Activated B cell treated with CpG ODN at 0.5 μM for 24 hours (primary cell): ENCODE measurements at regions of chr12 and their contacts with region 1.

Region 1: DNA sequence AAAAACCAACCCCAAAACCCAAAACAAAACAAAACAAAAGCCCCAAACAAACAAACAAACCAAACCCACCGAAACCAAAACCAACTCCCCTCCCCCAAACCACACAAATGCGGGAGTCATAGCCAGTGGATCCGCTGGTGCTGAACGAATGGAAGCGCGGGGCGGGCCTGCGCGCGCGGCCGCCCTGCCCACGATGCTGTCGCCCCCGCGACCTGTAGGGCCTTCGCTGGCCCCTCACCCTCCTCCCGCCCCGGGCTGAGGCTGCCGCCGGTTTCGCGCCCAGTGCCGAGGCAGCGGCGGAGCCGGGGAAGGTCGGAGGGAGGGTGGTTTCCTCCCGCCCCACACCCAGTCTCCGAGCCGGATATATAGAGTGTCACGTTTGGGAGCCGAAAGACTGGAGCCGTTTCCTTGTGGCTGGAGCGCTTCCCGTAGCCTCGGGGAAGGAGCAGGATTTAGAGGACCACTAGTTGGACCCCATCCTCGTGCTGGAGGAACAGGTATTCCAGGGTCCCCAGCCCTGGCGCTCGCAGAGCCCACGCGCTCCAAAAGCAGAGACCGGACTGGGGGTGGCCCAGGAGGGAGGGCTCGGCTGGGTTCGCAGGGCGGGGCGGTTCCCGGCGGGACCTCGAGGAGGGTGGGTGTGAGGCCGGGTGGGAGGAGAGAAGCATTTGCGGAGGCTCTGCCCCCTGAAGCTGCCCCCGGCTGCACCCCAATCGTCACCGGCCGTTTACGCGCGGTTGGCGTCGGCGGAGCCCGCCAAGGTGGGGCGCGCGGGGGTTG is at the start of gene FAR2:
- DNase-seq: no peak
- ATAC-seq: peak; percentile 30
- H3K4me3 Mint-ChIP-seq: peak within 1 kb of the TSS; percentile 78
- H3K27ac Mint-ChIP-seq: no peak within 1 kb of the TSS
- H3K4me1 Mint-ChIP-seq: peaks cover 30% of the 10 kb centered on the region
- H3K27me3 Mint-ChIP-seq: peaks cover 21% of the 10 kb centered on the region
- CTCF ChIP-seq: no peak
- total RNA-seq, gene FAR2: not detected in 2 replicates

Region 2: DNA sequence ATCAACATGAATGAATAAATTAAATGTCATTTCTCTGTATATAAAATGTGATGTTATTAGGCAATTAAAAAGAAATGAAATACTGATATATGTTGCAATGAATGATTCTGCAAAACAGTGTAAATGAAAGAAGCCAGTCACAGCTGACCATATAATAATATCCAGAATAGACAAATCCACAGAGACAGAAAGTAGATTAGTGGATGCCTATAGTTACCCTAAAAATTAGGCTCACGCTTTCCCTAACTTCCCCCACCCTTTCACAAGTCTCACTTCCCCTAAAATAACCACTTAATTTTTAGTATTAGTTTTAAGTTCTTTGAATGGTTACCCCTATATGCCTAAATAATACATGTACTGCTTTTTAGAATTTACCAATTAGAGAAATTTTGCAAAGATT is 349.0 kb before region 1 on chr12:
- CTCF ChIA-PET with region 1: no interaction called
- POLR2A ChIA-PET with region 1: no interaction called
- intact Hi-C with region 1: no loop called
- DNase-seq: no peak
- ATAC-seq: no peak
- H3K4me3 Mint-ChIP-seq: no peak overlapping the region
- H3K27ac Mint-ChIP-seq: no peak overlapping the region
- H3K4me1 Mint-ChIP-seq: no peaks in the 10 kb centered on the region
- H3K27me3 Mint-ChIP-seq: no peaks in the 10 kb centered on the region
- CTCF ChIP-seq: no peak

Region 3: DNA sequence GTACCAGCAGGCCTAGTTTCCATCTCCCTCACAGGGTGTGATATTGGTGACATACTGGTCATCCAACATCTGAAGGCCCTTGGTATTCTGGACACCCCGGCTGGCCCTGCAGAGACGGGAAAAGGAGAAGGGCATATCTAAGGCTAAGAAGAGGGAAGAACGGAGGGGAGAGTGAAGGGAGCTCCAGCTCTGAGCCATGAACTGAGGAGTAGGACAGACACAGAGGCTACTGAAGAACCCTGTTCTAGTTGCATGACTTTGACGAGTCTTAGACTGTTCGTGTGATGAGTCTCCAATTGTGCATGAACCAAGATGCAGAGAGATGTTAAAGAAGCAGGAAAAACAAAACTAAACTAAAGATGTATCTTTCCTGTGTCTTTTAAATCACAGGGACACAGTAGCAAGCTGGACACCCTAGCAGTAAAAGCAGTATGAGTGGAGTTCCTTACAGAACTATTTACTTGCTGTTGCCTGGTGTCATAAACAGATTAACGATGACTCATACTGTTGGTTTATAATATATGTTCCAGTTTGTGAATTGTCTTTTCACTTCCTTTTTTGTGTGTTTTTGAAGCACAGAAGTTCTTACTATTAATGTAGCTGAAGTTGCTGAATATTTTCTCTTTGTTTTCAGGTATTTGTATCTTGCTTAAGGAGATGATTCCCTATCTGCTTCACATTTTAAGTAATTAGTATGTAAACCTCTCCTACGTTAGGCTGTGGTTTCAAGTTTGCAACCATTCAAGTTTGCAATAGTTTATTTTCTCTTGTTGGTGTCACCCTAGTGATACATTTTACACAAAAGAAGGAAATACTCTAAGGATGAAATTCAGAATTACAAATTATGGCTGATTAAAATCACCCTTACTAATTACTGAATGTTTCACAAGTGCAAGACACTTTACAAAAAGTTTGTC is 15.6 kb after region 1 on chr12:
- CTCF ChIA-PET with region 1: no interaction called
- POLR2A ChIA-PET with region 1: interaction called, 3 read pairs
- intact Hi-C with region 1: loop called (anchors 1 kb)
- DNase-seq: no peak
- ATAC-seq: peak; percentile 86
- H3K4me3 Mint-ChIP-seq: no peak overlapping the region
- H3K27ac Mint-ChIP-seq: peak overlapping the region; percentile 16
- H3K4me1 Mint-ChIP-seq: peaks cover 15% of the 10 kb centered on the region
- H3K27me3 Mint-ChIP-seq: peaks cover 2% of the 10 kb centered on the region
- CTCF ChIP-seq: no peak